Left ventricle myocardium superior (tissue), 1 donor: ENCODE measurements at regions of chr2 and their contacts with region 1.

Region 1: DNA sequence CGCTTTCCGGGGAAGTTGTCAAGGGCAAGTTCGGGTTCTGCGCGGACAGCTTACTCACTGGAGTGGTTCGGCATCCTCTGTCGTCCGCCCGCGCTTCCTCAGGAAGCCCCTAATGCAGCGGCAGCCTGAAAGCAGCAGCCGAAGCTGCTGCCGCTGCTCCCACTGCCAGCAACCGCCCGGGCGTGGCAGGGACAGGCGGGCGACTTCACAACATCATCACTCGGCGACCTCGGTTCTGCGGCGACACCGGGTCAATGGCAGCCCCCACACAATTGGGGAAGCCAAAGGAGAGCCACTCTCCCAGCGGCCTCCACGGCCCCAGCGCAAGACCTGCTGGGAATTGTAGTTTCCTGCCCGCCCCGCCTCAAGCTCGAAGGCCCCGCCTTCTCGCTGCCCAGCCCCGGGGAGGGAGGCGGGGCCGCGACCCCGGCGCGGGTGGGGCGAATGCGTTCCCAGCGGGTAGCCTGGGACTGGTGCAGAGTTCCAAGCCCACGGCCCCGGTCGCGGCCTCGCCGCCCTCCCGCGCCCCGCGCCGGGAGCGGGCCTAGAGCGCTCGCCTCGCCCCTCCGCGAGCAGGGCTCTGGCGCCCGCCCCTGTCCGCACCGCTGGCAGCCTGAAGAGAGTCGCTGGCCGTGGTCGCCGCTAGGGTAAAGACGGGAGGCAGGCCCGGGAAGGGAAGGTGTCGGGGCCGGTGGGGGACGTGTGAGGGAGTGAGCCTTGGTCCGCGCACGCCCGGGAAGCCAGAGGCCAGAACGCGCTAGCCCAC is at the starts of genes STRADB and TRAK2:
- DNase-seq: peak; percentile 97
- ATAC-seq: peak; percentile 97
- total RNA-seq, gene STRADB: 81.4 TPM
- total RNA-seq, gene TRAK2: 202 TPM

Region 2: GRCh38 chr2:201396595-201396994 is 54.9 kb before region 1 on chr2:
- intact Hi-C with region 1: loop called (anchors 10 kb)
- DNase-seq: no peak
- ATAC-seq: no peak